Transverse colon (tissue), 4 donors: ENCODE measurements at regions of chr6 and their contacts with region 1.

Region 1: GRCh38 chr6:7899101-7899888 is 11.3 kb downstream of the TXNDC5 start:
- DNase-seq: peak; percentile 38
- H3K4me3 ChIP-seq: no peak overlapping the region
- H3K27ac ChIP-seq: peak overlapping the region in 3 of 4 donors; percentile 11 to 48 (median 33)
- H3K4me1 ChIP-seq: peaks cover 0 to 15% (median 8%) of the 10 kb centered on the region in 4 donors
- H3K27me3 ChIP-seq: no peaks in the 10 kb centered on the region
- CTCF ChIP-seq: peak in 2 of 5 experiments; percentile 15 to 39
- EP300 ChIP-seq: no peak
- POLR2A ChIP-seq: no peak

Region 2: GRCh38 chr6:7979831-7980230 is 80.5 kb after region 1 on chr6:
- in situ Hi-C with region 1: loop called in 1 of 4 experiments (anchors 10 kb)
- intact Hi-C with region 1: no loop called
- DNase-seq: no peak
- H3K4me3 ChIP-seq: no peak overlapping the region
- H3K27ac ChIP-seq: no peak overlapping the region
- H3K4me1 ChIP-seq: peaks cover 3 to 12% (median 10%) of the 10 kb centered on the region in 4 donors
- H3K27me3 ChIP-seq: no peaks in the 10 kb centered on the region
- CTCF ChIP-seq: no peak
- EP300 ChIP-seq: no peak
- POLR2A ChIP-seq: no peak